ENCODE measurements at regions of chr19 and their contacts with region 1.

Region 1: DNA sequence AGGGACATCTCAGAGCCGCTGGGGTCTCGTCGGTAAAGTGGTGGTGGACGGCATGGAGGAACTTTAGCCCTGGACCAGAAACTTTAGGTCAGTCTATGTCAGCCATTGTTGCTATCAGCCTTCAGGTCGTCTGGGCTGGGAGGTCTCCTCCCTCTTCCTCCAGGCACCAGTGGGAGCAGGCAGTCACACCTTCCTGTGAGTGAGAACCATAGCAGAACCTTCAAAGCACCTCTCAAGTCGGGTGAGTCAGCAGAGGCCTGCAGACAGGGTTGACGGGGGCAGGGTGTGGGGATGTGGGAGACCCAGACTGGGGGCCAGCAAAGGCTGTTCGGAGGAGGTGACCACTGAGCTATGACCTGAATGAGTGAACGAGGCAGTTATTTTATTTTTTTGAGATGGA is 15.4 kb upstream of the SBNO2 start:
- DNase-seq: no peak
- ATAC-seq: peak; percentile 59
- H3K4me3 ChIP-seq: no peak overlapping the region
- H3K27ac ChIP-seq: no peak overlapping the region
- H3K4me1 ChIP-seq: peaks cover 17% of the 10 kb centered on the region
- H3K27me3 ChIP-seq: no peaks in the 10 kb centered on the region
- CTCF ChIP-seq: no peak
- EP300 ChIP-seq: no peak
- POLR2A ChIP-seq: no peak
- RAD21 ChIP-seq: no peak

Region 2: DNA sequence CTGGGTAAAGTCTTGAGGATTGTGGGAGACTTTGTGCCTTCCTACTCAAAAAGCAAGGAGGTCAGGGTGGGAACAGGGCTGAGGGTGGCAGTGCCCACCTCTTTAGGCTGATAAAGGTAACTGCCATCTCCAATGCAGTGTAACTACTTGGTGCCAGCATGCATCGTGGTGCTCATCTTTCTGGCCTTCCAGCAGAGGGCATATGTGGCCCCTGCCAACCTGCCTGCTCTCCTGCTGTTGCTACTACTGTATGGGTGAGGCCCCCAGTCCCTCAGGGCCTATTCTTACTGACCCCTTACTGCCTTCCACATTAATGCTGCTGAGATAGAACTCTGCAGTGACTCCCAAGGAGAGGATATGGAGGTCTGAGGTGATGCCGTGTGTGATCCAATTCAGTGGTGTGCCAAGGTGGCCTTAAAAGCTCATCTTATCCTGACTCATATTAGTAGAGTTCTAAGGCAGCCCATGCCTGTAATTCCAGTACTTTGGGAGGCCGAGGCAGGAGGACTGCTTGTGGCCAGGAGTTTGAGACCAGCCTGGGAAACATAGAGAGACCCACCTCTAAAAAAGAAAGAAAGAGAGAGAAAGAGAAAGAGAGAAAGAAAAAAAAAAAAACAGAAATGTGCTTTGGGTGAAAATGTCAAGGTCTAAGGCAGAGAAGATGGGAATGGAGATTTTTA is 132.1 kb before region 1 on chr19:
- CTCF ChIA-PET with region 1: interaction called, 11 read pairs
- POLR2A ChIA-PET with region 1: no interaction called
- RAD21 ChIA-PET with region 1: interaction called, 5 read pairs
- SMC1A ChIA-PET with region 1: no interaction called
- in situ Hi-C with region 1: no loop called
- intact Hi-C with region 1: loop called (anchors 5 kb)
- DNase-seq: no peak
- ATAC-seq: peak; percentile 94
- H3K4me3 ChIP-seq: no peak overlapping the region
- H3K27ac ChIP-seq: no peak overlapping the region
- H3K4me1 ChIP-seq: no peaks in the 10 kb centered on the region
- H3K27me3 ChIP-seq: no peaks in the 10 kb centered on the region
- CTCF ChIP-seq: peak; percentile 41 to 74 (median 65); a peak in 5 of 6 replicates
- EP300 ChIP-seq: no peak
- POLR2A ChIP-seq: no peak
- RAD21 ChIP-seq: peak; percentile 27; the same call in 1 of the 2 replicates

Region 3: GRCh38 chr19:1131738-1132551 is 57.5 kb before region 1 on chr19:
- CTCF ChIA-PET with region 1: interaction called, 10 read pairs
- POLR2A ChIA-PET with region 1: interaction called, 3 read pairs
- RAD21 ChIA-PET with region 1: interaction called, 7 read pairs
- SMC1A ChIA-PET with region 1: interaction called, 9 read pairs
- in situ Hi-C with region 1: no loop called
- intact Hi-C with region 1: no loop called
- DNase-seq: peak; percentile 21
- ATAC-seq: peak; percentile 76
- H3K4me3 ChIP-seq: peak overlapping the region; percentile 91
- H3K27ac ChIP-seq: peak overlapping the region; percentile 86
- H3K4me1 ChIP-seq: peaks cover 34% of the 10 kb centered on the region
- H3K27me3 ChIP-seq: no peaks in the 10 kb centered on the region
- CTCF ChIP-seq: no peak
- EP300 ChIP-seq: no peak; a peak in 1 of 4 replicates
- POLR2A ChIP-seq: peak; percentile 80
- RAD21 ChIP-seq: no peak

Region 4: DNA sequence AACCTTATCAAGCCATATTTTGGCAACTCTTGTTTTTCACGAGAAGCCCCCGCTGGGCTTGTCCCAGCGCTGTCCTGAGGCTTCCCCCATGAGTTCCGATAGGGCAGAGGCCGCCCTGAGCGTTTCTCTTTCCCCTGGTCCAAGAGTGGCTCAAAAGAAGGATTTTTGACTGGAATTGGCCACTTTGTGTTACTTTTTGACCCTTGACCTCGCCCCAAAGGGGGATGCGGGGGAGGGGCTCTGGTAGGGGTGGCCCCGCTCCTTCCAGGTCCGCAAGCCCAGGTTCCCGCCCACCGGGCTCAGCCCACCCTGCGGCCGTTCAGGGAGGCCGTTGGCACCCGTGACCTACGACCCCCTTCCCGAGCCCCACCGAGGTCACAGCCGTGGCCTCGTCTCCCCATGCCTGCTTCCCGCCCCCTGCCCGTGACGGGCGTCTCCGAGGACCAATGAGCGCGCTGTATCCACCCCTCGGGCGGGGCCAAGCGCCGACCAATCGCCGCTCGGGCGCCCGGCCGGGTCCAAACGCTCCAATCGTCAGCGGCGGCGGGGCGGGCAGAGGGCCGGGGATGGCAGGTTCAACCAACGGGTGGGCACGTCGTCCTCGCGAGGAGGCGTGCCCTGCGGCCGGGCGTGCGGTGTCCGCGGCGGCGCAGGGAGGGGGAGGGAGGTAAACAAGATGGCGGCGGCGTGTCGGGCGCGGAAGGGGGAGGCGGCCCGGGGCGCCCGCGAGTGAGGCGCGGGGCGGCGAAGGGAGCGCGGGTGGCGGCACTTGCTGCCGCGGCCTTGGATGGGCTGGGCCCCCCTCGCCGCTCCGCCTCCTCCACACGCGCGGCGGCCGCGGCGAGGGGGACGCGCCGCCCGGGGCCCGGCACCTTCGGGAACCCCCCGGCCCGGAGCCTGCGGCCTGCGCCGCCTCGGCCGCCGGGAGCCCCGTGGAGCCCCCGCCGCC is 16.0 kb after region 1 on chr19 and contains the start of gene STK11:
- CTCF ChIA-PET with region 1: interaction called, 4 read pairs
- POLR2A ChIA-PET with region 1: interaction called, 4 read pairs
- RAD21 ChIA-PET with region 1: interaction called, 13 read pairs
- SMC1A ChIA-PET with region 1: no interaction called
- in situ Hi-C with region 1: no loop called
- intact Hi-C with region 1: no loop called
- DNase-seq: peak; percentile 83
- ATAC-seq: peak; percentile 97
- H3K4me3 ChIP-seq: peak within 1 kb of the TSS; percentile 98
- H3K27ac ChIP-seq: peak within 1 kb of the TSS; percentile 66
- H3K4me1 ChIP-seq: peaks cover 17% of the 10 kb centered on the region
- H3K27me3 ChIP-seq: no peaks in the 10 kb centered on the region
- CTCF ChIP-seq: no peak
- EP300 ChIP-seq: no peak
- POLR2A ChIP-seq: peak; percentile 85
- RAD21 ChIP-seq: no peak
- polyA plus RNA-seq, gene STK11: 0.33 to 0.74 TPM

Region 5: GRCh38 chr19:1232652-1233072 is 43.2 kb after region 1 on chr19:
- CTCF ChIA-PET with region 1: no interaction called
- POLR2A ChIA-PET with region 1: no interaction called
- RAD21 ChIA-PET with region 1: no interaction called
- SMC1A ChIA-PET with region 1: no interaction called
- in situ Hi-C with region 1: no loop called
- intact Hi-C with region 1: no loop called
- DNase-seq: no peak
- ATAC-seq: no peak
- H3K4me3 ChIP-seq: no peak overlapping the region
- H3K27ac ChIP-seq: no peak overlapping the region
- H3K4me1 ChIP-seq: no peaks in the 10 kb centered on the region
- H3K27me3 ChIP-seq: peaks cover 0 to 6% of the 10 kb centered on the region in 2 experiments; a peak in 2 of 4 replicates
- CTCF ChIP-seq: no peak
- EP300 ChIP-seq: no peak
- POLR2A ChIP-seq: no peak
- RAD21 ChIP-seq: no peak